ENCODE measurements at regions of chr1 and their contacts with region 1.

Region 1: DNA sequence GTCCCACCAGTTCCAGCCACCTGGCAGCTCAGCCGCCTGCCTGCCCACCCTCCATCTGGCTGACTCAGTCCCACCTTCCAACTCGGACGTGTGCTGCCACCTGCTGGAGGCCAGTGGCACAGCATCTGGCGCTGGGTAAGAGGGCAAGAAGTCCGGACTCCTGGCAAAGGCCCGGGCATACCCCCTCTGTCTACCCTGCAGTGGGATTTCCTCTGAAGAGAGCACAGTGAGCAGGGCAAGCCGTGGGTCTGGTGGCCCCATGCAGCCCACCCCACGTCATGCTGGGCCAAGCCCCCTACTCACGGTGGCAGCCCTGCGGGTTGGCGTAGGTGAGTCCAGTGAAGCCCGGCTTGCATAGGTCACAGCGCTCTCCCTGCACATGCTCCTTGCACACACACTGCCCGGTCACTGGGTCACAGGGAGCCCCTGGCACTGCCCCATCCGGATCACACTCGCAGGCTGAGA is 24.5 kb downstream of the LAMB3 start:
- DNase-seq: peak; percentile 29 to 85 (median 61)
- ATAC-seq: peak; percentile 79
- H3K4me3 ChIP-seq: no peak overlapping the region
- H3K4me3 Mint-ChIP-seq: no peak overlapping the region
- H3K27ac ChIP-seq: no peak overlapping the region
- H3K27ac Mint-ChIP-seq: no peak overlapping the region
- H3K4me1 ChIP-seq: no peaks in the 10 kb centered on the region
- H3K4me1 Mint-ChIP-seq: peaks cover 0 to 14% (median 3%) of the 10 kb centered on the region in 7 donors
- H3K27me3 ChIP-seq: no peaks in the 10 kb centered on the region
- H3K27me3 Mint-ChIP-seq: no peaks in the 10 kb centered on the region

Region 2: DNA sequence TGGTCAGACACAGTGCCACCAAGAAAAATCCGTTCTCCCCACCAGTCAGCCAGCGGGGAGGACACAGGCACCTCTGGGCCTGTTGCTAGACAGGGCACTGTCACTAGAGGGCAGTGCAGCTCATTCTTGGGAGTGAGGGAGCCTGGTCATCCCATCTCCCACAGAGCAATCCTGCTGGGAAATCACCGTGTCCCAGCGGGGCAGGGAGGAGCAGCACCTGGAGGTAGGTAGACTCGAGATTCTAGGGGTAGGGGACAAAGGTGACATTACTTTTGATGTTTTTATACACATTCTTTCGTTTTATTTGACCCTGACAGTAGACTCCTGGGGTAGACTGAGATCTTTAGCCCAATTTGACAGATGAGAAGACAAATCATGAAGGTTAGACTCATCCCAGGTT is 51.0 kb before region 1 on chr1:
- CTCF ChIA-PET with region 1: interaction called, 3 read pairs
- POLR2A ChIA-PET with region 1: no interaction called
- intact Hi-C with region 1: loop called (anchors 1 kb)
- DNase-seq: peak in 8 of 9 donors; percentile 29 to 77 (median 47)
- ATAC-seq: peak; percentile 85
- H3K4me3 ChIP-seq: no peak overlapping the region
- H3K4me3 Mint-ChIP-seq: no peak overlapping the region
- H3K27ac ChIP-seq: no peak overlapping the region
- H3K27ac Mint-ChIP-seq: no peak overlapping the region
- H3K4me1 ChIP-seq: no peaks in the 10 kb centered on the region
- H3K4me1 Mint-ChIP-seq: peaks cover 0 to 6% (median 0%) of the 10 kb centered on the region in 7 donors
- H3K27me3 ChIP-seq: no peaks in the 10 kb centered on the region
- H3K27me3 Mint-ChIP-seq: peaks cover 0 to 35% (median 5%) of the 10 kb centered on the region in 5 donors

Region 3: DNA sequence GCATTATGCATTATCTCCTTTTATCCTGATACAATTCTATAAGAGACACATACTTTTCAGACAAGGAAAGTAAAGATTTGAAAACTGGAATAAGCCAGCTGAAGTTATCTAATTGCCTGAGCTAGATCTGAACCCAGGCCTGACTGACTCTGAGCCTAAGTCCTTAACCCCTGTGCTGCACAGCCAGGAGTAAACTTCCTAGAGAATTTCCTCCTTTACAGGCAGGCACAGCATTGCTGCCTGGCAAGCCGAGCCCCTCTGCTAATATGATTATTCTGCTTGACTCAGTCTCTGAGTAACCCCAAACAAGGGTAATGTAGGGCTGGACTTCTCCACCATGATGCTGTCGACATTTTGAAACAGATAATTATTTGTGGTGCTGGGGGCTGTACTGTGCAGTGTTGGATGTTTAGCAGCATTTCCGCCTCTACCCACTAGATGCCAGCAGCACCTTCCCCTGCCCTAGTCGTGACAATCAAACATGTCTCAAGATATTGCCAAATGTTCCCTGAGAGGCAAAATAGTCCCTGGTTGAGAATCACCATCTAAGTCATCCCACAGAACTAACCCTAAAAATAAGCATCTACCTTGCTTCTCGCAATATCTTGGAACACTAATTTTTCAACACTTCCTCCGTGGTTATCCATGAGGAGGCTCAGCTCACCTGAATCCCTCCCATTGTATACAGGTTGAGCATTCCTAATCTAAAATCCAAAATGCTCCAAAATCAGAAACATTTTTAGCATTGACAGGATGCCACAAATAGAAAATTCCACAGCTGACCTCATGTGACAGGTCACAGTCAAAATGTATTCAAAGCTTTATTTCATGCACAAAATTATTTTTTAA is 25.7 kb before region 1 on chr1:
- CTCF ChIA-PET with region 1: no interaction called
- POLR2A ChIA-PET with region 1: no interaction called
- intact Hi-C with region 1: loop called (anchors 1 kb)
- DNase-seq: peak in 6 of 9 donors; percentile 23 to 44 (median 34)
- ATAC-seq: peak; percentile 83
- H3K4me3 ChIP-seq: no peak overlapping the region
- H3K4me3 Mint-ChIP-seq: no peak overlapping the region
- H3K27ac ChIP-seq: no peak overlapping the region
- H3K27ac Mint-ChIP-seq: no peak overlapping the region
- H3K4me1 ChIP-seq: no peaks in the 10 kb centered on the region
- H3K4me1 Mint-ChIP-seq: peaks cover 0 to 4% (median 0%) of the 10 kb centered on the region in 7 donors
- H3K27me3 ChIP-seq: no peaks in the 10 kb centered on the region
- H3K27me3 Mint-ChIP-seq: peaks cover 5 to 39% (median 16%) of the 10 kb centered on the region in 5 donors

Measured in naive thymus-derived CD4-positive, alpha-beta T cell (primary cell).